ENCODE measurements at regions of chr12 and their contacts with region 1.

Region 1: GRCh38 chr12:69157023-69157655 is 82.2 kb upstream of the CPSF6 start:
- DNase-seq: peak; percentile 90
- H3K4me3 ChIP-seq: peak overlapping the region; percentile 24
- H3K27ac ChIP-seq: no peak overlapping the region
- H3K4me1 ChIP-seq: no peaks in the 10 kb centered on the region
- H3K27me3 ChIP-seq: no peaks in the 10 kb centered on the region
- CTCF ChIP-seq: peak; percentile 99

Region 2: DNA sequence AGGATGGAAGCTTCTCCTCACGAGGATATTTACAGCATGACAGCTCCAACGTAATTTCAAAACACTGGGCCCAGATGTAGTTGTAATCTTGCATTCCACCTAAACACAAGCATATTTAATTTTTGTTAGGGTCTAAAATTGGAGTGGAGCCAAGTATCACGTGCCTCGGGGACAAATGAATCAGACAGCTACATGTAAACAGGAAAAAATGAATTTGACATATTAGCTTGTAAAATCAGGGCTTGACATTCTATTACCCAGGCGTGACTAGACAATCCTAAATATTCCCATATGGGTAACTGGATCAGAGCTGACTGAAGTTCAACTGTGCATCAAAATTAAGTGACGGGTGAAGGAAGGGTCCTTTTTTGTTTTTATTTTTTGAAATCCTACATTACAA is 290.2 kb before region 1 on chr12:
- CTCF ChIA-PET with region 1: no interaction called
- POLR2A ChIA-PET with region 1: no interaction called
- intact Hi-C with region 1: loop called (anchors 5 kb)
- DNase-seq: peak; percentile 7
- H3K4me3 ChIP-seq: no peak overlapping the region
- H3K27ac ChIP-seq: no peak overlapping the region
- H3K4me1 ChIP-seq: no peaks in the 10 kb centered on the region
- H3K27me3 ChIP-seq: no peaks in the 10 kb centered on the region
- CTCF ChIP-seq: no peak

Region 3: DNA sequence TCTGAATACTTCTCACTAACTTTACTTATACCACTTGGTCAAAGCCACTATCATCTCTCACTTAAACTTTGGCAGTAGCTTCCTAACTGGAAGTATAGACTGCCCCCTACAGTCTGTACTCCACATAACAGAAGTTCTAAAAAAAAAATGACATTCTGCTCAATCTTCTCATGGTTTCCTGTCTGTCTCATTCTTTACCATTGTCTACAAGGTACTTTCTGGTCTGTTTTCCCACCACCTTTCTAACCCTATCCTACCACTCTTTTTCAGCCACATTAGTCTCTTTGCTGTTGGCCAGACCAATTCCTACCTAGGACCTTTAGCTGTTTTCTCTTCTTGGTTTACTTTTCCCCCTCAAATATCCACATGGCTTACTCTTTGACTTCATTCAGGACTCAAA is 96.9 kb after region 1 on chr12:
- CTCF ChIA-PET with region 1: interaction called, 3 read pairs
- POLR2A ChIA-PET with region 1: no interaction called
- intact Hi-C with region 1: loop called (anchors 10 kb)
- DNase-seq: peak; percentile 63
- H3K4me3 ChIP-seq: no peak overlapping the region
- H3K27ac ChIP-seq: no peak overlapping the region
- H3K4me1 ChIP-seq: peaks cover 12% of the 10 kb centered on the region
- H3K27me3 ChIP-seq: no peaks in the 10 kb centered on the region
- CTCF ChIP-seq: peak; percentile 71

Region 4: DNA sequence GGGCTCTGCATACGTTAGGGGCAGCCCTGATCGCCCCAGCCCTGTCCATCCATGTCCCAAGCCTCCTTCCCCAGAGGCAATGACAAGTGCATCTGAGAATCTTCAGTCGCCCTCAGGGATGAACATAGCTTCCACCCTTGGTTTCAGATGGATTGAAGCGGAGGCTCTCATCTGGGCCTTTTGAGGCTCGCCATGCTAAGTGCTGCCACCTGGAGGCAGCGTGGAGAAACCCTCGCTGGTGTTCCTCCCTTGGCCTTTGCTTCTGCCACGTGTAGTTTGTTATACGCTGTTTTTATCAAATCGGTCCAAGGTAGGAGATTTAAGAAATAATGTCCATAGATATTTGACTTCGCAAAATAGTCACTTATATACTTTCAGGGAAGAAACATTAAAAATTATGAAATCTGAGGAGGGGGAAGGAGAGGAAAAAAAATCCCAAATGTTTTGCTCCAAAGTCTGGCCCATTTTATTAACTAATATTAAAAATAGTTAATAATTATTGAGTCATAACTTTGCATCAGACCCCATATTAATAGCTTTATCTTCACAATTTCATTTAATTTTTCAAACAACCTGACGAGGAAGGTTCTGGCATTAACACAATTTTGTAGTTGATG is 482.4 kb after region 1 on chr12:
- CTCF ChIA-PET with region 1: no interaction called
- POLR2A ChIA-PET with region 1: no interaction called
- intact Hi-C with region 1: loop called (anchors 10 kb)
- DNase-seq: peak; percentile 86
- H3K4me3 ChIP-seq: no peak overlapping the region
- H3K27ac ChIP-seq: no peak overlapping the region
- H3K4me1 ChIP-seq: no peaks in the 10 kb centered on the region
- H3K27me3 ChIP-seq: no peaks in the 10 kb centered on the region
- CTCF ChIP-seq: peak; percentile 91